ENCODE measurements at regions of chr11 and their contacts with region 1.

Region 1: GRCh38 chr11:288328-289144 is at the start of gene PGGHG:
- DNase-seq: peak; percentile 95
- total RNA-seq, gene PGGHG: 18.8 to 20.7 TPM

Region 2: DNA sequence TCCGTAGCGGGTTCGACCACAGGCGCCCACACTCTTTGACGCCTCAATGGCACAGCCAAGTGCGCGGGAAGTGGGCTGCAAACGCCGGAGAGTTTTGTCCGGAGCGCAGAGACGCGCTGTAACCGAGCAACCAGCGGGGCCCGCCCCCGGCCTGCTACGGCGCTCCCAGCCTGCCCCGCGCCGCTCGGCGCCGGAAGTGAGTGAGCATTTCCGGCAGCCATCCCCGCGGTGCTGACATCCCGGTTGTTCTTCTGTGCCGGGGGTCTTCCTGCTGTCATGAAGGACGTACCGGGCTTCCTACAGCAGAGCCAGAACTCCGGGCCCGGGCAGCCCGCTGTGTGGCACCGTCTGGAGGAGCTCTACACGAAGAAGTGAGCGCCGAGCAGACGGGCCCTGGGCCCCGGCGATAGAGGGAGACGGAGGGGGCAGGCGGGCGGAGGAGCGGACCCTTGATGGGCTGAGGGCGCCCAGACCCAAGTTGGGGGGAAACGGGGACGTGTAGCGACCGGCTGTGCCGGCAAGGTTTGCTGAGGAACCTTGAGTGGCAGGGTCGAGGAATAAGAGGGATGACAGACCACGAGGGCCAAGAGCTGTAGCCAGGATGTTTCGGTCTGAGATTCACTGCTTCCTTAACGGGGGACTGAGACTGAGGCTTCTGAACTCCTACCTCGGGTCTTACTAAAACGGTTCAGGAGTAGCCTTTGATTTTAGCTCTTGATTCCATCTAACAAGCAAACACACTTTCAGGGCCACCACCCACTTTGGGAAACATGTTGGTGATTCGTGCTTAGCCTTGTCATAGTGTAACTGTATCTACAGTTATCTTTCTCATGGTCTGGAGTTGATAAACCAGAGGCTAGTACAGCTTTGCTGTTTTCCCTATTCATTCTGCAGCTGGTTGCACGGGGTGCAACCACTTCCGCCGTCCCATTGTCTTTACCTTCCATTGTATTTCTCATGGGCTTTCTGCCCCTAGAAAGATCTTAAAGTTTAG is 51.5 kb before region 1 on chr11 and contains the start of gene PSMD13:
- intact Hi-C with region 1: loop called in 1 of 2 experiments (anchors 5 kb)
- DNase-seq: peak; percentile 97
- total RNA-seq, gene PSMD13: 83.2 to 89.6 TPM

Region 3: DNA sequence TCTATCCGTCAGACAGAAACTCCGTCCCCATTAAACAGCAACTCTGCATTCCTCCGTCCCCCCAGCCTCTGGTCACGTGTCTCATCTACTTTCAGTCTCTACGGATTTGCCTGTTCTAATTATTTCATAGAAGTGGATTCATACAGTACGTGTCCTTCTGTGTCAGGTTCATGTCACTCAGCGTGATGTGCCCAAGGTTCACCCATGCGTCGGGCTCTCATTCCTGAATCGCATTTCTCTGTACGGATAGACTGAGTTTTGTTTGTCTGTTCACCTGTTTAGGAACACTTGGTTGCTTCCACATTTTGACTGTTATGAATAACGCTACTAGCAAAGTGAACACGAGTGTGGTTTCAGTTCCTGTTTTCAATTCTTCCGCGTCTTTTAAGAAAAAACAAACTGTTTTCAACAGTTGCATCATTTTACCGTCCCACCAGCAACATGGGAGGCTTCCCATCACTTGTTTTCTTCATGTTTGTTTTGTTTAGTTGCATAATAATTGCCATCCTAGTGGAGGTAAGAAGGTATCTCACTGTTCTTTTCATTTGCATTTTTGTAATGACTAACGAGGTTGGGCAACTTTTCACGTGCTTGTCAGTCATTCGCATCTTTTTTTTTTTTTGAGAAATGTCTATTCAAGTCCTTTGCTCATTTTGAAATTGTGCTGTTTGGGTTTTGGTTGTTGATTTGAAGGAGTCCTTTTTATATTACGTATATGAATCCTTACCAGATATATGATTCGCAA is 19.2 kb before region 1 on chr11:
- intact Hi-C with region 1: no loop called
- DNase-seq: no peak

Measured in posterior vena cava (tissue), 2 donors.